ENCODE measurements at regions of chr3 and their contacts with region 1.

Region 1: GRCh38 chr3:150408221-150409102 is at the start of gene TSC22D2:
- DNase-seq: peak; percentile 90
- CTCF ChIP-seq: peak; percentile 19

Region 2: GRCh38 chr3:150124142-150124541 is 284.3 kb before region 1 on chr3:
- CTCF ChIA-PET with region 1: no interaction called
- POLR2A ChIA-PET with region 1: no interaction called
- DNase-seq: no peak
- CTCF ChIP-seq: no peak

Region 3: GRCh38 chr3:150348500-150348899 is 60.0 kb before region 1 on chr3:
- CTCF ChIA-PET with region 1: no interaction called
- POLR2A ChIA-PET with region 1: no interaction called
- DNase-seq: no peak
- CTCF ChIP-seq: no peak

Region 4: DNA sequence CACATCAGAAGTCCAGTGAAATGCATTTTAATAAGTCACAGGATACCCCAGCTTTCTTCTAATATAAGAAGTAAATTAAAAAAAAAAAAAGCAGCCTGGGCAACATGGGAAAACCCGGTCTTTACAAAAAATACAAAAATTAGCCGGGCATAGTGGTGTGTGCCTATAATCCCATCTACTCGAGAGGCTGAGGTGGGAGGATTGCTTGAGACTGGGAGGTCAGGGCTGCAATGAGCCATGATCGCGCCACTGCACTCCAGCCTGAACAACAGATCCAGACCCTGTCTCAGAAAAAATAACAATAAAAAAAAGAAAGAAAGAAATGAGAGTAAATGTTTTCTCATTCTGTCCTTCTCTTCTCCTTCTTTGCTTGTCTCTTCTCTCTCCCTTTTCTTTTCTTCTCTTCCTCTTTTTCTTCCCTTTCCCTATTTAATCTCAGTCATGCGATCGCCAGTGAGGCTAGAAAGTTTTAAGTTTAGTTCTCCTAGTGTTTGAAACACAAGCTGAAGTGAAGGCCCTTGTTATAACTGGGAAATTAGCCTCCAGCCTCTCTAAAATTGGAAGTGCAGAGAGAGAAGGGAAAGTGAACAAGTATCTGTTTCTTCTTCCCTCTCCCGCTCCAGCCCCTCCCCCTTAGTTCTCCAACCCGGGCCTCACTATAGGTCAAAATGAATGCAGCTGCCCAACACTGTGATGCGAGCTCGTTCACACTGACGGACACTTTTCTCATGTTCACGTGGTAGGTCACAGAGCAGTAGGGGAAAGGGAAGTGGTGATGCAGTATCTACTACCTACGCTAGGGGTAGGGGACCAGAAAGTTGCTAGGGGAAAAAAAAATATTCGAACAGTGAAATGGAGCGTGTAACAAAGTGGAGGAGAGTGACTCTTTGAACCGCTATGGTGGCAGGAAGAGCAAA is 23.9 kb before region 1 on chr3:
- CTCF ChIA-PET with region 1: interaction called, 21 read pairs
- POLR2A ChIA-PET with region 1: interaction called, 8 read pairs
- DNase-seq: peak; percentile 80
- CTCF ChIP-seq: no peak

Region 5: DNA sequence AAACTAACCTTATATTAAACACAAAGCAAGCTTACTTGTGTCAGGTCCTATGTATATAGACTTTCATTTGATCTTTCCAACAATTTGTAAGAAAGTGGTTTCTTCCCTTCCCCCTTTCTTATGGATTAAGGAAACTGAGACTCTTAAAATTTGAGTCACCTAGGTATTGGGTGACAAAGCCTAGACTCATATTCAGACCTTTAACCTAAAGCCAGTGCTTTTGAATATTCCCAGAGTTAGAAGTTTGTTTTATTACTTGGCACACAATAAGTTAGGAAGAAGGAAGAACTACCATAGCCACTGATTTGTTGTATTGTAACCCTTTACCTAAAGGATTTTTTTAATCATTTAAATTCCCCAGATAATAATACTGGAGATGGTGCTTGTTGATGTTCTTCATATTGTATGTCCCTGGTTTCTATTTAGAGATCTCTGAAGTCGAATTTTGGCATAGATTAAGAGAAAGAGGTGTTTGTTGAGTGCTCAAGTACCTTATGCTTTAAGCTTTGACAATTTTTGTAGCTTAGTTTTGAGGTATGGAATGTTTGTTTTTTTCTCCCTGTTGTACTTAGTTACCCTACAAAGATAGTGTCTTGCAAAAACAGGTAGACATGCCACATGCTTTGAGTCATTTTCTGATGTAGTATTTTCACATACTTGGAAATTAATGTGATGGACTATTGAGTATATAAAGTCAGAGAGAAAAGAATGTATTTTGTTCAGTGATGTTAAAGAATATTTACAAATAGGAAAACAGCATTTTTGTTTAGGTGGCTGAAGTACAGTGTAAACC is 10.8 kb after region 1 on chr3:
- CTCF ChIA-PET with region 1: interaction called, 39 read pairs
- POLR2A ChIA-PET with region 1: interaction called, 5 read pairs
- DNase-seq: no peak
- CTCF ChIP-seq: no peak

Region 6: DNA sequence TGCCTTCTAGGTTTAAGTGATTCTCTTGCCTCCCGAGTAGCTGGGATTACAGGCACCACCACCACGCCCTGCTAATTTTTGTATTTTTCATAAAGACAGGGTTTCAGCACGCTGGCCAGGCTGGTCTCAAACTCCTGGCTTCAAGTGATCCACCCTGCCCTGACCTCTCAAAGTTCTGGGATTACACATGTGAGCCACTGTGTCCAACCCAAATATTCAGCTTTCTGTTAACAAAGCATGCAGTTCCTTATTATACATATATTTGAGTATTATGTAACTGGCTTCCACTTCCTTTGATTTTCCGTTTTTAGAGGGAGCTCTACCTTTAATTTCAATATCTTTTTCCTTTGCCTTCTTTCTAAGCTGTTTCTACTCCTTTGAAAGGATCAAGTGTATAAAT is 25.8 kb after region 1 on chr3:
- CTCF ChIA-PET with region 1: interaction called, 13 read pairs
- POLR2A ChIA-PET with region 1: interaction called, 8 read pairs
- DNase-seq: no peak
- CTCF ChIP-seq: no peak

Region 7: DNA sequence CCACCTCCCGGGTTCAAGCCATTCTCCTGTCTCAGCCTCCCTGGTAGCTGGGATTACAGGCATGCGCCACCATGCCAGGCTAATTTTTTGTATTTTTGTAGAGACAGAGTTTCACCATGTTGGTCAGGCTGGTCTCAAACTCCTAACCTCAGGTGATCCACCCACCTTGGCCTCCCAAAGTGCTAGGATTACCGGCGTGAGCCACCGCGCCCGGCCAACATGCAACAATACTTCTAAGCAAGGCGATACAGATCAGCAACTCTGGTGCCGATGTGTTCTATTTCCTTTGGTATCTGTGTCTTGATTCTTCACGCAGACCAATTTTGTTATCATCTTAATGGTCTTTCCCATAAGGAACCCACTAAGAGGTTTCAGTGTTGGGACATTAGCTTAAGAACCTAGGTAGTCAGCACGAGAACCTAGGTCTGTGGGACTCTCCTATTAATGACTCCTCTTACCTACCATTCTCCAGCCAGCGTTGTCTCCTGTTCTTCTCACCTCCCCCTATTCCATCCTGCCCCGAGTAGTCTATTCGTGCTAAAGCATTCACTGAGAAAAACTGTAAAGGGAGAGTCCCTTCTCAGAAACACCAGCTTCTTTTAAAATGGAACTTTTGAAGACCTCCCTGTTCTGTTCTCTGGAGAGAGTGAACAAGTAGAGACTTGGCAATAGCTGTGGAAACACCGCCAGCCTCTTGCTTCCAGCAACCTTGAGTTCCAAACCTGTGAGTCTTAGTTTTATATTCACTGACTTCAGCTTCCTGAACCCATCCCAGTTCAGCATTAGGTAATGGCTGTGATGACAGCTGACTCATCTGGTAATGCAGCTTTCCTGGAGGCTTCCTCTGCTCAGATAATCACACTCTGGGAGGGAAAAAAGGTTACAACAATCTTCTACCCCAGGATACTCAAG is 60.8 kb after region 1 on chr3:
- CTCF ChIA-PET with region 1: no interaction called
- POLR2A ChIA-PET with region 1: no interaction called
- DNase-seq: no peak
- CTCF ChIP-seq: no peak

Region 8: DNA sequence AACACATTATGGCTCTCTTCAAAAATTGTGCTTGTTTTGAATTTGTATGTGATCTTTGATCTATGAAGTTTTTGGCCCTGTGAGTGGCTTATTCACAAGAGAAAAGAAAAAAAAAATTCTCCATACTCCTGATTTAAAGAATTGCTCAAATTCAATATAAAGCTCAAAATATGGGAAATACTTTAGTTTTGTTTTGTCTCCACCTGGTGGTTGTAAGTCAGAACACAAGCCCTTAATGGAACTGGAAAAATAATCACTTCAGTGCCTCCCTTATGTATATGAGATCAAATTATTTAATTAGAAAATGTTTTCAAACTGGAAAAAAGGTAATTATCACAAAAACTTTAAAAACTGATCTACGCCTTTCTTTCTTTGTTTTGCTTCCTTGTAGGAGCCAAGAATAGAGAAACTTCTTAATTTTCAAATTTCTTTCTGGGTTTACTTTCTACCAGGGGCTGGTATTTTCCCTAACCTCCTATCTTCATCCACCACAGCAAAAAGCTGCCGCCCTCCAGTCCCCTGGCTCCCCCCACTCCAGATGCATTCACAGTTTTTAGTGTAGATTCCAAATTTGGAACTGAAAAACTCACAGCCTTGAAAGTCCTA is 87.2 kb after region 1 on chr3:
- CTCF ChIA-PET with region 1: interaction called, 19 read pairs
- POLR2A ChIA-PET with region 1: no interaction called
- DNase-seq: peak; percentile 53
- CTCF ChIP-seq: peak; percentile 61

Measured in GM10248 (cell line).